Tibial artery (tissue), 4 donors: ENCODE measurements at regions of chrX and their contacts with region 1.

Region 1: GRCh38 chrX:46561824-46562657 is 11.5 kb upstream of the CHST7 start:
- DNase-seq: no peak
- H3K4me3 ChIP-seq: no peak overlapping the region
- H3K27ac ChIP-seq: no peak overlapping the region
- H3K4me1 ChIP-seq: peaks cover 0 to 4% (median 0%) of the 10 kb centered on the region in 4 donors
- H3K27me3 ChIP-seq: no peaks in the 10 kb centered on the region
- CTCF ChIP-seq: no peak

Region 2: DNA sequence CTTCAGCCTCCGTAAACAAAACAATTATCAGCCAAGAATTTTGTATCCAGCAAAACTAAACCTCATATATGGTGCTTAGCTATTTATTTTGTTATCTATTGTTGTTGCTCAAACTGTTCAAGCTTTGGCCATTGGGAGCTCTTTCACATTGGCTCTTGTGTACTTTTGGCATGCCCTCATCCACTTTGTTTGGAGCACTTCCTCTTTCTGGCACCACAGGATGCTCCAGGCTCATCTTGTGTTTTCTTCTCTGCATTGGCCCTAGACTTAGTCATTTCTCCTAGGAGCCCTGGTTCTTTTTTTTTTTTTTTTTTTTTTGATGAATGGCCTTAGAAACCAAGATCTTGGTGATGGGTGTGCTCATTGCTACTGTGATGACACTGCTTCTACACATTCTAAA is 1435.9 kb before region 1 on chrX:
- intact Hi-C with region 1: no loop called
- DNase-seq: no peak
- H3K4me3 ChIP-seq: no peak overlapping the region
- H3K27ac ChIP-seq: no peak overlapping the region
- H3K4me1 ChIP-seq: no peaks in the 10 kb centered on the region
- H3K27me3 ChIP-seq: no peaks in the 10 kb centered on the region
- CTCF ChIP-seq: no peak

Region 3: GRCh38 chrX:46294239-46294638 is 267.8 kb before region 1 on chrX:
- intact Hi-C with region 1: no loop called
- DNase-seq: no peak
- H3K4me3 ChIP-seq: no peak overlapping the region
- H3K27ac ChIP-seq: no peak overlapping the region
- H3K4me1 ChIP-seq: no peaks in the 10 kb centered on the region
- H3K27me3 ChIP-seq: no peaks in the 10 kb centered on the region
- CTCF ChIP-seq: no peak

Region 4: DNA sequence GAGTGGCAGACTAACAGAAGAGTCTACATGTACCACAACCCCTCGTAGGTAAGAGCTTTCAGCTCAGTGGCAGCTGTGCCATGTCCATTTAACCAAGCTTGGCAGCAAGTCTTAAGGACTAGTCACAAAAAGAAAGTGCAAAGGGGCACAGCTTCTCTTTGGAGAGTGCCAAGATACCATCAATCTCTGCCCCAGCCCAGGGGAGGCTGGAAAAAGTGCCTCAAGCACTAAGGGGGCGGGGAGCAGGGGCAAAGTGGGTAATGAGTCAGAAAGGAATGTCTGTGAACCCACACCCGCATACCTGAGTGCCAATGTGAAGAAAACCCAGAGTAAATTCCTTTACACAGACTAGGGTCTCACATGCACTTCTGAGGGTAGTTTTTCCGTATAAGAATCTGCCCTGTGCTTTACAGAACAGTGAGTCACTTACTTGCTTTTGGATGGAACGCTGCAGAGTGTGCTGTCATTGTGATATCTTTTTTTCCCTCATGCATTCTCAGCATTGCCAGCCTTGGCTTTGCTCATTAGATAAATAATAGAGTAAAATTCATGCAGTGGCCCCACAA is 236.6 kb before region 1 on chrX:
- intact Hi-C with region 1: no loop called
- DNase-seq: no peak
- H3K4me3 ChIP-seq: no peak overlapping the region
- H3K27ac ChIP-seq: peak overlapping the region; percentile 62 to 70
- H3K4me1 ChIP-seq: peaks cover 0 to 31% (median 3%) of the 10 kb centered on the region in 4 donors
- H3K27me3 ChIP-seq: no peaks in the 10 kb centered on the region
- CTCF ChIP-seq: no peak

Region 5: GRCh38 chrX:46446727-46447378 is 115.2 kb before region 1 on chrX:
- intact Hi-C with region 1: no loop called
- DNase-seq: peak; percentile 83 to 92
- H3K4me3 ChIP-seq: peak overlapping the region; percentile 70 to 72
- H3K27ac ChIP-seq: peak overlapping the region; percentile 87 to 91
- H3K4me1 ChIP-seq: peaks cover 0 to 14% (median 2%) of the 10 kb centered on the region in 4 donors
- H3K27me3 ChIP-seq: no peaks in the 10 kb centered on the region
- CTCF ChIP-seq: no peak

Region 6: GRCh38 chrX:46642145-46642544 is 80.1 kb after region 1 on chrX:
- intact Hi-C with region 1: loop called (anchors 10 kb)
- DNase-seq: no peak
- H3K4me3 ChIP-seq: no peak overlapping the region
- H3K27ac ChIP-seq: no peak overlapping the region
- H3K4me1 ChIP-seq: no peaks in the 10 kb centered on the region
- H3K27me3 ChIP-seq: no peaks in the 10 kb centered on the region
- CTCF ChIP-seq: peak; percentile 42 to 50